ENCODE measurements at regions of chr3 and their contacts with region 1.

Region 1: DNA sequence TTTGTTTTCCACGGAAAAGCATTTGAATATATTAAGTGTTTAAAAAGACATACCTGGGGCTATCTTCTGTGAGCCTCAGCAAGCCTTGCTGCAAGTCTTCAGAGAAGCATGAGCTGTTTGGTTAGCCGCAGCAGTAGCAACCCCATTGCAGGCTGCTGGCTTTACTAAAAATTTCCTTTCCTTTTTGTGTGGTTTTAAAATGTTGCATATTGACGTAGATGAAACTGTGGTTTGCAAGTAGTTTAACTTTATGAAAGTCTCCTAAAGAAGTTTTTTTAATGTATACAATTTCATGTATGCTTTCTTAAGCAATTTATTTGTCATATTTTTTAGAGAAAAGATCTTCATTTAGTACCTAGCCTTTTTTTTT is at the start of gene GPR171:
- DNase-seq: peak; percentile 93
- H3K4me3 Mint-ChIP-seq: peak within 1 kb of the TSS; percentile 89
- H3K27ac Mint-ChIP-seq: peak within 1 kb of the TSS; percentile 99
- H3K4me1 Mint-ChIP-seq: peaks cover 52% of the 10 kb centered on the region
- H3K27me3 Mint-ChIP-seq: no peaks in the 10 kb centered on the region
- total RNA-seq, gene GPR171: 159 and 164 TPM in 2 replicates

Region 2: DNA sequence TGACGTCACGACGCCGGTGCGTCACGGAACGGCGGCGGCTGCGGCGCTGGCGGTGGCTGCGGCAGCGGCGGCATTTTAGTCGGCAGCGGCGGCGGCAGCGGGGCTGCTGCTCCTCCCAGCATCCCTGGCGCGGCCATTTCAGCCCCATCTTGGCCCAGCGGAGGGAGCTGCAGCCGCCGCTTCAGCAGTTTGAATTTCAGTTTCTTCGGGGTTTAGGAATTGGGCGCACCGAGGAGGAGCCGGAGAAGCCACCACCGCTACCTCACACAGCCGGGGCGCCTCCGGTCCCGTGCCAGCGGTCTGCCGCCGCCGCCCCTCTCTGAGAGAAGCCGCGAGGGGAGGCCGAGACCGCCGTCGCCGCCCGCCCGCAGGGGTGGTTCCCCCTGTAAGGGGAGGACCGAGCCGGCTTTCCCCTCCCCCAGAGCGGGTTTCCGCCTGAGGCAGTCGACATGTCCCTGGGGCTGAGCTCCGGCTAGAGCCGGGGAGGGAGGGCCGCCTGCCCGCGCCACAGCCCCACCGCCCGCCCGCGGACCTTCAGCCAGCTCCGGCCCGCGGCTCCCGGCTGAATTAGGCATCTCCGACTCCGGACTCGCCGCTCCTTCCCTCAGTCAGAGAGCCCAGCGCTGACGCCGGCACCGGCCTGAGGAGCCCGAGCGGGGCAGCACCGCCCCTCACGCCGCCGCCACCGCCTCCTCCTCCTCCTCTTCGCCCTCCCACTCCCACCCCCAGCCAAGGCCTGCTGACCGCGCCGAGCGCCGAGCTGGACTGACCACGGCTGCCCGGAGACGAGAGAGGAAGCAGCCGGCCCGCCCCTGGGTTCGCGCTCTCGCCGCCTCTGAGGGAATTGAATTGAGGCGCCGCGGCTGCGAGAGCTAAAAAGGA is 794.6 kb before region 1 on chr3 and contains the start of gene TSC22D2:
- intact Hi-C with region 1: loop called (anchors 5 kb)
- DNase-seq: peak; percentile 99
- H3K4me3 Mint-ChIP-seq: peak within 1 kb of the TSS; percentile 81
- H3K27ac Mint-ChIP-seq: peak within 1 kb of the TSS; percentile 92
- H3K4me1 Mint-ChIP-seq: peaks cover 23% of the 10 kb centered on the region
- H3K27me3 Mint-ChIP-seq: peaks cover 8% of the 10 kb centered on the region
- total RNA-seq, gene TSC22D2: 16.4 and 18.7 TPM in 2 replicates

Region 3: GRCh38 chr3:150737874-150738713 is 464.9 kb before region 1 on chr3:
- intact Hi-C with region 1: loop called (anchors 2 kb)
- DNase-seq: peak; percentile 72
- H3K4me3 Mint-ChIP-seq: peak overlapping the region; percentile 64
- H3K27ac Mint-ChIP-seq: peak overlapping the region; percentile 99
- H3K4me1 Mint-ChIP-seq: peaks cover 76% of the 10 kb centered on the region
- H3K27me3 Mint-ChIP-seq: no peaks in the 10 kb centered on the region

Region 4: DNA sequence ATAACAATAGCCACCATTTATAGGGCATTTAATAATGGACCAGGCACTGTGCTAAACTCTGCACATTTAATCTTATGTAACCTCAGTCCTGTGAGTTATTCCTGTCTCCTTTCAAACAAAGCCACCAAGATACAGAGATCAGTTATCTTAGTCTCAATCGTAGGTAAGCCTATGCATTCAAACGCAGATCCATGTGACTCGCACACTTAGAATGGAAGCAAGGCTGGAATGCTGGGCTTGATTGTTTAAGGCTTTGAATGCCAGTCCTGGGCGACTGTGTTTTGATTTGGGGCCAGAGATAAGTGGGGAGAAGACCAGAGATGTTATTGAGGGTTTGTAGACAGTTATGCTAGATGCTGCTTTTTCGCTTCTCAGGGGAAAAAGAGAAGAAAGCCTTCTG is 95.3 kb before region 1 on chr3:
- intact Hi-C with region 1: no loop called
- DNase-seq: no peak
- H3K4me3 Mint-ChIP-seq: no peak overlapping the region
- H3K27ac Mint-ChIP-seq: no peak overlapping the region
- H3K4me1 Mint-ChIP-seq: no peaks in the 10 kb centered on the region
- H3K27me3 Mint-ChIP-seq: peaks cover 12% of the 10 kb centered on the region

Region 5: GRCh38 chr3:151191095-151191494 is 11.9 kb before region 1 on chr3:
- intact Hi-C with region 1: loop called (anchors 1 kb)
- DNase-seq: no peak
- H3K4me3 Mint-ChIP-seq: peak overlapping the region; percentile 63
- H3K27ac Mint-ChIP-seq: peak overlapping the region; percentile 89
- H3K4me1 Mint-ChIP-seq: peaks cover 42% of the 10 kb centered on the region
- H3K27me3 Mint-ChIP-seq: no peaks in the 10 kb centered on the region

Region 6: DNA sequence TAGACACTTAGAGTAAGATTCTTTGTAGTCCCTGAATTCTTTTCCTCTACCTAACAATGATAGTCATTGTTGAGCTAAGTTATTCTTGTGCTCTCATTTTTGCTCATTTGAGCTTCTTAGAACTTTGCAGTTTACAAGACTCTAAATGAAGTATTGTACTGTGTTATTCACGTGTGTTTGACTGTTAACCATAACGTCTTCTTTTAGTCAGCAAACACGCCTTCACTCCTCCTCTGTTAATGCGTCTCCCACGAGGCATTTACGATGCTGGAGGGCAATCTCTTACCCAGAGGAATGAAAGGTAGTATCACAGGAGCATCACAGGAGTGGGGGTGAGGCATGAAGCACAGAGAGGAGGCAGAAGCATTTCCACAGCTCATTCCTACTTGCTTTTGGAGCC is 90.1 kb after region 1 on chr3:
- intact Hi-C with region 1: no loop called
- DNase-seq: peak; percentile 45
- H3K4me3 Mint-ChIP-seq: no peak overlapping the region
- H3K27ac Mint-ChIP-seq: no peak overlapping the region
- H3K4me1 Mint-ChIP-seq: no peaks in the 10 kb centered on the region
- H3K27me3 Mint-ChIP-seq: peaks cover 28% of the 10 kb centered on the region

Region 7: GRCh38 chr3:152202976-152203626 is 1000.1 kb after region 1 on chr3:
- intact Hi-C with region 1: loop called (anchors 2 kb)
- DNase-seq: no peak
- H3K4me3 Mint-ChIP-seq: peak overlapping the region; percentile 78
- H3K27ac Mint-ChIP-seq: peak overlapping the region; percentile 87
- H3K4me1 Mint-ChIP-seq: peaks cover 60% of the 10 kb centered on the region
- H3K27me3 Mint-ChIP-seq: no peaks in the 10 kb centered on the region

Region 8: DNA sequence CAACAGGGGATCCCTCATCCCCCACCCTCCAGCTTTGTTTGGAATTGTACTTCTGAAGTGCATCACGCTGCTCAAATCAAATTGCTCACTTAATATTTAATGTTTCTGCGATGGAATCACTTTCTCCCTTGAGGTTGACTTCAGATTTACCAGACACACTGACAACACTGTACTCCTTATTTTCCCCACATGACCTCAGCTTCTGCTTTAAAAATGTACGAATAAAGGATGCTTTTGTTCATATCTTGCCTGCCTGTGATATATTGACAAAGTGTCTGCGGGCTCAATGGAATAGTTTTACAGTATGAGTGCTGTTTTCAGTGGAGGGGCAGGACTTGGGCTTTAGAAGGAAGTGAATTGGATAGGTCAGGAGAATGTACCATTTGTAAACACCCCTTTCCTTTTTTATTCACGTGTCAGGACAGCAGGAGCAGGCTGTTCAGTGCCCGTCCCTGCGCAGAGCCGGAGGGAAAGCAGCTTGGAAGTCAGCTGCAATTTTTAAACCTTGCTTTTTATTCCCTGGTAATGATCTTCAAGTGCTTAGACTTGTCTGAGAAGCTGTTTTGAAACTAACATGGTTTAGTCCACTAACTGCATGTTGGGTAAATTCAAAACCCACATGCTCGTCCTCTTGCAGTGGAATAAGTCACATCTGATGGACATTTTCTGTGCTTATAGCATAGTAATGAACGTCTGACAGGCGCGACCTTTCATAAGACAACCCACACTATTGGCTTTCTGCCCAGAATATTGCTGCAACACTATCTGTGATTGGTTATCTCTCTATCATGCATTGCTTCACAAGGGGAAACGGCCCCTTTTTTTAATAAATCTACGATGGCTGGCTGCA is 1095.6 kb after region 1 on chr3:
- intact Hi-C with region 1: loop called (anchors 1 kb)
- DNase-seq: peak; percentile 83
- H3K4me3 Mint-ChIP-seq: peak overlapping the region; percentile 88
- H3K27ac Mint-ChIP-seq: peak overlapping the region; percentile 98
- H3K4me1 Mint-ChIP-seq: peaks cover 59% of the 10 kb centered on the region
- H3K27me3 Mint-ChIP-seq: no peaks in the 10 kb centered on the region